ENCODE measurements at regions of chr6 and their contacts with region 1.

Region 1: DNA sequence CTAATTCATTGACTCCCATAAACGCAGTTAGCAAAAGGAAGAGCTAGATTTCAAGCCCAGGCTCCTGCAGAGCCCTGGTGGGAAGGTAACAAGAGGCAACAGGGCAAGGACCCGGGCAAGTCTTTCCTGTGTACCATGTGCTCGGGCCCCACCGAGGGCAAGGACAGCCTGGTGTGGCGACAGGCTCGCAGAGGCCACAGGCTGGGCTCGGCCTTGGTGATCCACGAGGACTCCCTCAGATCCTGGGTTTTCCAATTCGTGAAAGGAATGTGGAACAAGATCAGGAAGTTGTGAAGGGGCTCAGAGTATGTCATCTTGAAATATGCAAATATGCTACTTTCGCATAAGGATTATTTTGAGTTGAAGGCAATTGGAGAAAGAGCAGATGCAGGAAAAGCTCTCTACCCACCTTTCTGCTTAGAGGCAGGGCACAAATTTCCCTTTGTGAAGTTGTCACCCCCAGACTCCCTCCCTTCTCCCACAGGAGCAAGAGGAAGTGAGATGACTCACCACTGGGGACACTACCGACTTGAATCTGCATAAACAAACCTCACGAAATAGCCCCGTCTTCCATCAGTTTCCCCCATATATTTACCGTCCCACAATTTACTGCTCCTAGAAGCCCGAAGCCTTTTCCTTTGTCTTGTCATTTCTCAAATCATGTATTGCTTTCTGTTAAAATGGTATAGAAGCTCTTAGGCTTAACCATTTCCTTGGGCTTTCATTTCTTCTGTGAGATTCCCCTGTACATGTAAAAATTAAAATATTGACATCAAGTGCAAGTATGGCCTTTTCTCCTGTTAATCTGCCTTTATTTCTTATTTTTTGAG is 79.0 kb downstream of the PSMG4 start:
- DNase-seq: no peak

Region 2: DNA sequence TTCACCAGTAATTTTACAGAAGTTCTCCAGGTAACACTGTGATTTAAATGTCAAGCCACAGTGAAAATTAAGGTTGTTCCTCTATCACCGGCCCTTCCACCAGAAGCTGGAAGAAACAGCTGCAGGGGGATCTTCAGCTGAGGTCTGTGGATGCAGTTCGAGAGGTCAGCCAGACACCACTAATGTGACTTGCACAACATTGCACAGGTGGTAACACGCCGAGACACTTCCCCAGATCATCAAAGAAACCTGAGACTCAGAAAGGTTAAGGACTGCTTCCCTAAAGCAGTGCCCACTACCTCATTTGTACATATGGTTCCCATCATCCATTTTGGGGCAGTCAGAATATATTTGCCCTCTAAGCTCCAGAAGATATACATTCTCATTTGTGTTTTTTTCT is 426.6 kb before region 1 on chr6:
- CTCF ChIA-PET with region 1: interaction called, 10 read pairs
- POLR2A ChIA-PET with region 1: no interaction called
- DNase-seq: no peak

Region 3: DNA sequence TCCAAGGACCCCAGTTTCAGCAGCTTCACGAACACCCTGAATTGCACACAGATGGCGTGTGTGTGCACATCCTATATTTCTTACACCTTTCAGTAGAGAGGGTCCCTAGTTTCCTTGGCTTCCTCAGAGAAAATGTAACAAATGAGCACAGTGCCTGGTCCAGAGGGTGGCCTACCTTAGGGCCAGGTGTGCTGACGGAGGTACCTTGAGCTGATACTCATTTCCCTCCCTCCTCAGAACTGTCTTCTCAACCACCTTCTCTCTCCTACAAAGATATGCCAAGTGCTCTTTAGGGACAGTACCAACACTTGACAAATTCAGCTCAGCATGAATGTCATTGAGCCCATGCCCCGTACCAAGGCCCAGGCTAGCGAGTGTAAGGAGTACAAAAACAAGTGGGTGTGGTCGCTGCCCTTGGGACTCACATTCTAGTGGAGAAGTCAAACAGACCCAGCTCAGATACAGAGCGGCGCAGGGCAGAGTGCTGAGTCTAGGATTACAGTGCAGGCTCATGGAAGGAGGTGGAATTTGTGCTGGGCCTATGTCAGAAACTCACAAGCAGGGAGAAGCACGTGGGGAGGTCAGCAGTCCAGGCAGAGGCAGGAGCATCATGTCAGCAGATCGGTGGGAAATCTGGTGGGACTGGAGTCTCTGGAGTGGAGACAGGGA is 228.9 kb before region 1 on chr6:
- CTCF ChIA-PET with region 1: no interaction called
- POLR2A ChIA-PET with region 1: no interaction called
- DNase-seq: no peak

Region 4: GRCh38 chr6:3231247-3232016 is 106.3 kb before region 1 on chr6:
- CTCF ChIA-PET with region 1: no interaction called
- POLR2A ChIA-PET with region 1: no interaction called
- DNase-seq: peak; percentile 72

Region 5: GRCh38 chr6:3372007-3372846 is 34.5 kb after region 1 on chr6:
- CTCF ChIA-PET with region 1: no interaction called
- POLR2A ChIA-PET with region 1: no interaction called
- DNase-seq: no peak